ENCODE measurements at regions of chr6 and their contacts with region 1.

Region 1: GRCh38 chr6:34447910-34448309 is 18.0 kb upstream of the PACSIN1 start:
- DNase-seq: no peak
- ATAC-seq: no peak
- H3K4me3 ChIP-seq: no peak overlapping the region
- H3K27ac ChIP-seq: no peak overlapping the region
- H3K4me1 ChIP-seq: no peaks in the 10 kb centered on the region
- H3K27me3 ChIP-seq: peaks cover 0 to 2% (median 0%) of the 10 kb centered on the region in 3 donors
- CTCF ChIP-seq: no peak

Region 2: GRCh38 chr6:34465531-34466241 is 17.8 kb after region 1 on chr6 and contains the start of gene PACSIN1:
- intact Hi-C with region 1: loop called in 1 of 2 experiments (anchors 1 kb)
- DNase-seq: no peak
- ATAC-seq: peak in 1 of 4 donors; percentile 44
- H3K4me3 ChIP-seq: peak within 1 kb of the TSS; percentile 58
- H3K27ac ChIP-seq: no peak within 1 kb of the TSS
- H3K4me1 ChIP-seq: no peaks in the 10 kb centered on the region
- H3K27me3 ChIP-seq: peaks cover 0 to 27% (median 6%) of the 10 kb centered on the region in 3 donors
- CTCF ChIP-seq: no peak
- total RNA-seq, gene PACSIN1: 0.11 TPM in 2 of 4 donors, not detected in the others

Measured in psoas muscle (tissue), 8 donors.